ENCODE measurements at regions of chr6 and their contacts with region 1.

Region 1: DNA sequence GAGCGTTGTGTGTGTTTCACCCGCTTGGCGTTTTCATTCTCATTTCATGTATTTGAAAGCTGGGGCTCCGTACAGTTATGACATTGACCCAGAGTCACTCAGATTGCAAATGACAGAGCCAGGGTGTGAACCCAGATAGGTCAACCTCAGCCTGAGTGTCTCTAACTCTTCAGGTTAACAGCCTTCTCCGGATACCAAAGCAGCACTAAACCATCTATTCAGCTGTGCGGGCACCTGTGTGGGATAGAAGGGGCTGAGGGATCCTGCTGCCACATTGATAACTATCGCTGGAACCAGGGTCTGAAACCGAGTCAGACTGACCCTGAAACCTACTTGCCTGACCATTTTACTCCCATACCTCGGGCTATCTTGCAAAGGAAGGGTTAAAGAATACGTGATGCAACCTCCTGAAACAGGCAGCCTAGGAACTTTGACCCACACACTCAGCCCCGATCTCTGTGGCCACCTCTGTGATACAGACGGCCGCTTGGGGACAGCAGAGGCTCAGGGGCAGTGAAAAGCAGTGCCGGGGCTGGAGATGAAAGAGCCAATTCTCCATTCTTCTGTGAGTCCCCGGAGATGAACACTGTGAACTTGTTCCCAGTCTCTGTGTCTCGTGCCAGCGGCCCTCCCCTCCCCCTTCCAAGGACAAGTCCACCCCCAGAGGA is 233.5 kb upstream of the QKI start:
- DNase-seq: peak; percentile 79
- ATAC-seq: peak; percentile 96 to 98

Region 2: DNA sequence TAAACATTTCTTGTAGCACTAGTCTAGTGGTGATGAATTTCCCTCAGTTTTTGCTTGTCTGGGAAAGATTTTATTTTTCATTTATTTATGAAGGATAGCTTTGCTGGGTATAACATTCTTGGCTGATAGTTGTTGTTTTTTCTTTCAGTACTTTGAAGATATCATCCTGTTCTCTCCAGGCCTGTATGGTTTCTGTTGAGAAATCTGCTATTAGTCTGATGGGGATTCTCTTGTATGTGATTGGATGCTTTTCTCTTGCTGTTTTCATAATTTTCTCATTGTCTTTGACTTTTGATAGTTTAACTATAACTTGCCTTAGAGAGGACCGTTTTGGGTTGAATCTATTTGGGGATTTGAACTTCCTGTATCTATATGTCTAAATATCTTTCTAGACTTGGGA is 246.2 kb before region 1 on chr6:
- intact Hi-C with region 1: no loop called
- DNase-seq: no peak
- ATAC-seq: no peak

Region 3: DNA sequence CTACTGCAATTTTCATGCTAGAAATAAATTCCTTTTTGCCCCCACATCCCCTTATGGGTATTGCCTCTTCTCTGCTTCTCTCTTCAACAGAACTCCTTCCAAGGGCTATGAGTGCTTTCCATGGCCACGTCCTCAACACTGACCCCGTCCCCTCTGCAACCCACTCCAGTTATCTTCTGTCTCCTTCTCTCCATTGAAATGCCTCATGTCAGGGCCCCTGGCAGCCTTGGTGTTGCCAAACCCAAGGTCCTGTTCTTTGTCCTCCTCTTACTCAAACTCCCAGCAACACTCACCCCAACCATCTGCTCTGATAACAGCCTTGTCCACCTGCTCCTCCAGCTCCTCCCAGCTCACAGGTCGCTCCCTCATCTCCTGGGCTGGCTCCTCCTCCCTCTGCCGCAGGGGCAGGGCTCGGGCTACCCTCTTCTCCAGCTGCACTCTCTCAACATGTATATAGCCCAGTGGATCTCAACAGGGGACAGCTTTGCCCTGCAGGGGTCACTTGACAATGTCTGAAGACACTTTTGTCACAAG is 37.4 kb after region 1 on chr6:
- intact Hi-C with region 1: no loop called
- DNase-seq: no peak
- ATAC-seq: peak in 1 of 2 donors; percentile 14

Region 4: DNA sequence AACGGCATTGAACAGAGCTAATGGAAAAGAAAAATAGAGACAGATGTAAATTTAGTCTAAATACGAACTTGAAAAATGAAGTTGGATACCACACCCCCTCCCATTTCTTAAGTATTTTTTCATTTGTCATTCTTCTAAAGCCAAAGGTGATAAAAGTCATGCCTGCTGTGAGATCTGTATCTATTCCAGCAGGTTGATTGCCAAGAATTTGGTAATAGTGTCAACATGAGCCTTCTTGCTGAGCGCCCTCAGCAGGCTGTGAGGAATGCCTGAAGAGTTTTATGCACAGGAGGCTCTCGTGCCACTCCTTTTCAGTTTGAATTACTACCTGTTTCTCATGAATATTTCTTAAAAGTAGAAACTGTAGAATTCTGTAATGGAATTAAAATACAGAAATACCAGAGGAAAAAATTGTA is 398.9 kb after region 1 on chr6:
- intact Hi-C with region 1: loop called (anchors 10 kb)
- DNase-seq: no peak
- ATAC-seq: peak in 1 of 2 donors; percentile 14

Region 5: DNA sequence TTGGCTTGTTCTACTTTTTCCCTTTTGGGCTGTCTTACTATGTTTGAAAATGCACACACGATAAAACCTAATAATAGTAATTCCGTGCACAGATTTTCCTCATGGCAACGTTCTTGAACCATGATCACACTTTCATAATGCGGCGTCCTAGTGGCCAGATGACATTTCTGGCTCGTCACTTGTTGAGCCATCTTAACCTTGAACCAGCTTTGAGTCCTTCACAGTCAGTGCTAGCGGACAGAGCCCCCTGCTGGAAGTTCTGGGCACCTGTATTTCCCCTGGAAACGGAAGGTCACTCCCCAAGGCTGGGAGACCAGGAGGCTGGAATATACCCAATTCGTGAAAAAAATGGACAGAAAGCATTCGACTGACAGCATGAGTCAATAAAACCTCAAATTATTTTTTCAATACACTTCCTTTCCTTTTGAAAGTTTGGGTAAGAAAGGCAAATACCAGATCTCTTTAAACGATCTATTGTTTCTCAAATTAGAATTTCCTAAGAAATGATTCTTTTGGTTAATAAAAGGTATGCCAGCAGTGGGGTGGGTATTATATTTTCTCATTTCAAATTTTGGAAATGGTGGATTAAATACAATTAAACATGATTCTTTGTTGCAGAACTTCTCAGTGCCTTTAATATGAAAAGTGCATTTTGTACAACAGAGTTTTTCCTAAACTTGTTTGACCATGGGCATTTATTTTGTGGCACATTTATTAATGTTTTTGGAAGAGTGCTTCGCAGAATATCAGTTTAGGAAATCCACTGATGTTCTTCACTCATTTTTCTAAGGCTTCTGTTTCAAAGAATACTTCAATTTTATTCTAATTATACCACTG is 775.8 kb after region 1 on chr6:
- intact Hi-C with region 1: loop called in 1 of 2 experiments (anchors 10 kb)
- DNase-seq: peak; percentile 84
- ATAC-seq: peak; percentile 88 to 92

Region 6: GRCh38 chr6:164927288-164928056 is 1746.5 kb after region 1 on chr6:
- intact Hi-C with region 1: loop called in 1 of 2 experiments (anchors 10 kb)
- DNase-seq: peak; percentile 58
- ATAC-seq: peak; percentile 94 to 95

Measured in left cardiac atrium (tissue), 4 donors.